Left cardiac atrium (tissue), 4 donors: ENCODE measurements at regions of chr1 and their contacts with region 1.

Region 1: DNA sequence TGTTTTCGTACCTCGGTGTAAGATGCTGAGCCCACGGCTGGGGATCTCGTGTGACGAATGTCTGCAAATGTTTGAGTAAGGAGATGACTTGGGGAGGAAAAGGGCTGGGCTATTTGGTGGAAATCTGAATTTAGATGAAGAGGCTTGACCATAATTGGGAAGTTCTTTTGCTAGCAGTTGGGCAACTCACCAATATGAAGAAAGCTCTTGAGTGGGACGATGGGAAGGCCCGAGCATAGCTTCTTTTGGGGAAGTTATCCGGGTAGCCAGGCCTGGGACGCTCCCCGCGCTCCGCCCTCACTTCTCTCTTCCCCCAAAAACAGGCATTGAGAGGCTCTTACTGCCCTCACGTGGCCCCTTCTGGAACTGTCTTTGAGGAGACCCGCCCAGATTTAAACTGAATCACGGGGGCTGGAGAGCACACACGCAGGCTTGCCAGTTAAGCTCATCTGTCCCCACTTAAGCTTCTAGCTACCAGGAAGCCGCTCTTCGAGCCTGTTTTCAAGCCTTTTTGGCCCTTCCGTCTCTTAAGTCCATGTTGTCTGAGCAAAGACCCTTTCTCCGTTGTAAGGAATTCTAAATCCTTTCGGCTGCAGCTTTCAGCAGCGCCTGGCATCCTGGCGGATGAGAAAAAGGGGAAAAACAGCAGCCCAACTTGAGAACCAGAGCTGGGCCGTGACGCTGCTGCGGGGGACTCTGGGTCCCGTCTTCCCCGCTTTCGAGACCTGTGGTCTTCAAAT is 93.1 kb downstream of the NID1 start:
- DNase-seq: peak; percentile 93
- ATAC-seq: peak; percentile 94 to 97

Region 2: GRCh38 chr1:235679644-235680043 is 292.1 kb before region 1 on chr1:
- intact Hi-C with region 1: no loop called
- DNase-seq: no peak
- ATAC-seq: no peak

Region 3: DNA sequence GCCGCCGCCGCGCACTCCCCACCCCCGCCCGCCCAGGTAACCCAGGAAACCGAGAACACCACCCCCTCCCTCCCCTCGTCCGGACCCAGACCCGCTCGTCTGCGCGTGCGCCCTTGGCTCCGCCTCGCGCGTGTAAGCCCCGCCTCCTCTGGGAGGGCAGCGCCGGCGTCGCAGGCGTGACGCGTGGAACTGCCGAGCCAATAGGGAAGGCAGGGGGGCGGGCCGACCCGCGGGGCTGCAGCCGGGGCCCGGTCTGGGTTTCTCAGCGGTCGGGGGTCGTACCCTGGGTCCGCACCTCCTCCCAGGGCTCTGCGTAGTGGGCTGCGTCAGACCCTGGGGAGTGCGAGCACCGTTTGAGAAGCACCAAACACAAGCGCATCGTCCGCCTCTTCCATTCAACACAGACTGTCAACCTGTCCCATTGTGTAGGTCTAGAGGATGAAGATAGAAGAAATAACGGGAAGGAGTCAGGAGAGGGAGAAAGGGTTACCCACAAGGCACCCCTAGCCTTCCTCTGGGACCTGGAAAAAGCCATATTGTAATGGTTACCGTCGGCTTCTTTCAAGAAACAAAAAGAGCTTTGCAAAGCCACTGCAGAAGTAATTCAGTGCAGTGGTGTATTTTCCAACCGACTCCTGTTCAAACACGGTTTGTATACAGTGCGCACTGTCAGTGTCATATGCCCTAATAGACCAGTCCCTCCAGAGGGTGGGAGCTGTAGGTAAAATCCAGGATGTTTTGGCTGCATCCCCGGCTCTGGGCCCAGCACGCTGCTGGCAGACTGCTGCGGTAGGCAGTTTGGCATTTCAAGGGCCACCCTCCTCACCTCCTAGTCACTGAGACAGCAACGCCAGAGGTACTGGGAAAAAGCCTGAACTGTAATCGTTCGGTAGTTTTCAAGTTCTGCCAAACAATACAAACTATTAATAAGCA is 104.6 kb before region 1 on chr1:
- intact Hi-C with region 1: loop called in 1 of 2 experiments (anchors 5 kb)
- DNase-seq: peak; percentile 95
- ATAC-seq: peak; percentile 98

Region 4: DNA sequence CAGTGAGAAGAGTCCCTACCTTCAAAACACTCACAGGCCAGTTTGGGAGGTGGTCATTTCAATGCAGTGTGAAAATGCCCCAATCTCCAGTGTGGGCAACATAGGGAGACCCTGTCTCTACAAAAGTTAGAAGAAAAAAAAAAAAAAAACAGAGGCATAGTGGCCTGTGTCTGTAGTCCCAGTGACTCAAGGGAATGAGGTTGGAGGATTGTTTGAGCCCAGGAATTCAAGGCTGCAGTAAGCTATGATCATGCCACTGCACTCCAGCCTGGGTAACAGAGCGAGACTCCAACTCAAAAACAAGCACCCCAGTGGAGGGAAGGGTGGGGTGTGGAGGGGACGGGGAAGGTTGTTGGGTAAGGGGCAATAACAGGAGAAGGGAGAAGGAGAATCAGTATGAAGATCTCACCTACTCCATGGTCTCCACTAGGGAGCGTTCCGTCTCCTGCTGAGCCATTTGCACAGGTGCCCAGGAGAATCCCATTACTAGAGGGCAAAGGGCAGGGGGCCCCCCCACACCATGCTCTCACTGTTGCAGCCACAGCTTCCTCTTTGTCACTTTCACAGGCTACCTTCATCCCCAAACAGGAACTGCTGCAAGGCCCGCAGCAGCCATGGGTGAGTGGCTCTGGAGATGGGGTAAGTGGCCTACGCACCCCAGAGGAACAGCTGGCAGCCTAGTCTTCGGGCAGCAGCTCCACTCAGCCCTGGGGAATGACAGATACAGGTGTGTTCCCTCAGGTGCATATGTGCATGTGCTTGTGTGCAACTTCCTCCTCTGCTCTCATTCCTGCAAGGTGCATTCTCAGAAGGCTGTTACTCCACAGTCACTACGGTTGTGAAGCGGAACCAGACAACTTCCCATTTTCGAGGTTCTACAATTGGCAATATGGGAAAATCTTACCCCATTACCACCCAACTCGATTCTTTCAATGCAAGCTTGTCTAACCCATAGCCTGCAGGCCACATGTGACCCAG is 17.1 kb before region 1 on chr1:
- intact Hi-C with region 1: no loop called
- DNase-seq: peak; percentile 34
- ATAC-seq: peak in 1 of 2 donors; percentile 75

Region 5: DNA sequence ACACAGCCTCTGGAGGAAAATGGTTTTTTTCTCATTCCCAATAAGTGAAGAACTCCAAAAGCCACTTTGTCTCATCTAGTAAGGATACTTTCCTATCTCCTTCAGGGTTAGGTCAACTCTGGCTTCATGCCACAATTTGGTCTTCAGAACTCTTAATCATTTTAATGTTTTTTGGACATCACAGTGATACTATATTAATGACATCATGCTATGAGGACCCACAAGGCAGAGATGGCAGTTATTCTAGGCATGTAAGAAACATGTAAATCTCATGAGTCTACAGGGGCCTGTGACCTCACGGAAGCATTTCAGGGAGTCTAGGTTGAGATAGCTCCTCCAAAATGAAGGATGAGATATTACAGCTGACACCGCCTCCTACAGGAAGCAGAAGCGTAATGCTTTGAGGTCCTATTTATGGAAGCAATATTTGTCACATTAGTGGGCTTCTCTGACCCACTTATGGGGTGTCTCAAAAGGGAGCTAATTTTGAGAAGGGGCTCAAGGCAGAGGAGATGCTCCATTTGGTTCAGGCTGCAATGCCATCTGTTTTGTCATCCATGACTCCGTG is 165.6 kb after region 1 on chr1:
- intact Hi-C with region 1: no loop called
- DNase-seq: no peak
- ATAC-seq: no peak

Region 6: DNA sequence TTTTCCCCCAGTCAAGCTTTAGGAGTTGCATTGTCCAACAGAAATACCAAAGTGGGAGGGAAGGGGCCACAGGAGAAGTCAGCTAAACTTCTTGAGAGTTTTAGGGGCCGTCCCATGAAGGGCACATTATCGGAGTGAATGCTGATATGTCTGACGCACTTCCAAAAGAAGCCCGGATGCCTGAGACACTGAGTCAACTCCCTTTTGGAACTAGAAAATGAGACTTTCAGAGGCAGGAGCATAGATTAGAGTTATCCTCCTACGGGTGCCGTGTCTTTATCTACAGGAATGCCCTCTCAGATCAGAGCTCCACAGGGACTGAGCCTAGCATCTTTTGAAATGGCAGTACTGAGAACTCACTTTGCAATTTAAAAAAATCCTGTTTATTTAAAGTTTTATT is 727.6 kb after region 1 on chr1:
- intact Hi-C with region 1: no loop called
- DNase-seq: no peak
- ATAC-seq: peak; percentile 38 to 81